Activated CD4-positive, alpha-beta memory T cell treated with anti-CD3 and anti-CD28 coated beads, Interleukin-2, amount 10 ng/mL, durations not matched to agents 7 days and 5 days (primary cell): ENCODE measurements at regions of chr5 and their contacts with region 1.

Region 1: DNA sequence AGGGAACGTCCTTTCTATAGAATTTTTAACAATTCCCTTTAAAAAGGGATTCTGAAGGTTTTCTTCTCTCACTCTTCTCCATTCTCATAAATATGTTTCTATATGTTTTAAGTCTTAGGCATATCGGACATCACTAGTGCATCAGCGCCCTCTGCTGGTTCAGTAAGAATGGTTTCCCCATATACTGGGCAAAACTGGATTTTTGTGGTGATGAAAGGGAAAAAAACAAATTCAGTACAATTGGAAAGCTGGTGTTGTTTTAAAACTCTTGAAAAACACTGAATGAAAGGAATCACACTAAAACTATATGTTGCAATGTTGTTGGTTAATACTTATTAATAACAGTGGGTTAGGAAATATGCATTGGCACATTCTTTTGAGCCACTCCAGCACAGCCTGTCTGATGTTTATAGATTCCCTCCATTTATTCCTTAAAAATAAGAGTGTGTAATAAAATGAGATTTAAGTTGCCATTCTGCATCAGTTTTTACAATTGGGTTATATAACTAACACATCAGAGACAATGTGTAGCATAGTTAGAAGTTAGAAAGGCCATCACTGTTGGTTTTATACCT is 15.8 kb downstream of the CWC27 start:
- DNase-seq: peak; percentile 74
- H3K4me3 Mint-ChIP-seq: no peak overlapping the region
- H3K27ac Mint-ChIP-seq: no peak overlapping the region
- H3K4me1 Mint-ChIP-seq: peaks cover 3% of the 10 kb centered on the region
- H3K27me3 Mint-ChIP-seq: no peaks in the 10 kb centered on the region

Region 2: GRCh38 chr5:64634997-64635686 is 149.4 kb before region 1 on chr5:
- CTCF ChIA-PET with region 1: interaction called, 31 read pairs
- POLR2A ChIA-PET with region 1: no interaction called
- DNase-seq: no peak
- H3K4me3 Mint-ChIP-seq: no peak overlapping the region
- H3K27ac Mint-ChIP-seq: no peak overlapping the region
- H3K4me1 Mint-ChIP-seq: peaks cover 10% of the 10 kb centered on the region
- H3K27me3 Mint-ChIP-seq: peaks cover 32% of the 10 kb centered on the region